ENCODE measurements at regions of chr10 and their contacts with region 1.

Region 1: GRCh38 chr10:45672181-45673073 is at the start of gene ZFAND4:
- DNase-seq: peak; percentile 87 to 98 (median 93)
- ATAC-seq: peak; percentile 98
- H3K4me3 ChIP-seq: peak within 1 kb of the TSS; percentile 86
- H3K4me3 Mint-ChIP-seq: peak within 1 kb of the TSS; percentile 94
- H3K27ac ChIP-seq: peak within 1 kb of the TSS; percentile 64 to 81
- H3K27ac Mint-ChIP-seq: peak within 1 kb of the TSS; percentile 87
- H3K4me1 ChIP-seq: peaks cover 12% of the 10 kb centered on the region
- H3K4me1 Mint-ChIP-seq: peaks cover 42% of the 10 kb centered on the region
- H3K27me3 ChIP-seq: no peaks in the 10 kb centered on the region
- H3K27me3 Mint-ChIP-seq: no peaks in the 10 kb centered on the region
- CTCF ChIP-seq: no peak
- total RNA-seq, gene ZFAND4: 30.4 to 34.5 TPM

Region 2: GRCh38 chr10:45249978-45250693 is 422.3 kb before region 1 on chr10:
- CTCF ChIA-PET with region 1: interaction called, 3 read pairs
- POLR2A ChIA-PET with region 1: no interaction called
- intact Hi-C with region 1: loop called in 1 of 2 experiments (anchors 10 kb)
- DNase-seq: peak in 3 of 14 experiments; percentile 65 to 69 (median 69)
- ATAC-seq: peak; percentile 37
- H3K4me3 ChIP-seq: no peak overlapping the region
- H3K4me3 Mint-ChIP-seq: peak overlapping the region; percentile 21
- H3K27ac ChIP-seq: no peak overlapping the region
- H3K27ac Mint-ChIP-seq: no peak overlapping the region
- H3K4me1 ChIP-seq: peaks cover 3% of the 10 kb centered on the region
- H3K4me1 Mint-ChIP-seq: peaks cover 5% of the 10 kb centered on the region
- H3K27me3 ChIP-seq: no peaks in the 10 kb centered on the region
- H3K27me3 Mint-ChIP-seq: peaks cover 4% of the 10 kb centered on the region
- CTCF ChIP-seq: peak; percentile 72

Region 3: GRCh38 chr10:45464958-45465567 is 207.4 kb before region 1 on chr10:
- CTCF ChIA-PET with region 1: interaction called, 7 read pairs
- POLR2A ChIA-PET with region 1: interaction called, 6 read pairs
- intact Hi-C with region 1: loop called (anchors 2 to 5 kb)
- DNase-seq: peak; percentile 63 to 86 (median 72)
- ATAC-seq: peak; percentile 98
- H3K4me3 ChIP-seq: no peak overlapping the region
- H3K4me3 Mint-ChIP-seq: no peak overlapping the region
- H3K27ac ChIP-seq: no peak overlapping the region
- H3K27ac Mint-ChIP-seq: no peak overlapping the region
- H3K4me1 ChIP-seq: peaks cover 14% of the 10 kb centered on the region
- H3K4me1 Mint-ChIP-seq: peaks cover 25% of the 10 kb centered on the region
- H3K27me3 ChIP-seq: no peaks in the 10 kb centered on the region
- H3K27me3 Mint-ChIP-seq: no peaks in the 10 kb centered on the region
- CTCF ChIP-seq: peak; percentile 90

Region 4: GRCh38 chr10:45580371-45581215 is 91.8 kb before region 1 on chr10:
- CTCF ChIA-PET with region 1: no interaction called
- POLR2A ChIA-PET with region 1: interaction called, 15 read pairs
- intact Hi-C with region 1: no loop called
- DNase-seq: peak in 4 of 14 experiments; percentile 11 to 65 (median 58)
- ATAC-seq: peak; percentile 58
- H3K4me3 ChIP-seq: peak overlapping the region; percentile 56
- H3K4me3 Mint-ChIP-seq: peak overlapping the region; percentile 90
- H3K27ac ChIP-seq: peak overlapping the region; percentile 61 to 86
- H3K27ac Mint-ChIP-seq: peak overlapping the region; percentile 84
- H3K4me1 ChIP-seq: peaks cover 9% of the 10 kb centered on the region
- H3K4me1 Mint-ChIP-seq: peaks cover 43% of the 10 kb centered on the region
- H3K27me3 ChIP-seq: no peaks in the 10 kb centered on the region
- H3K27me3 Mint-ChIP-seq: no peaks in the 10 kb centered on the region
- CTCF ChIP-seq: no peak

Region 5: DNA sequence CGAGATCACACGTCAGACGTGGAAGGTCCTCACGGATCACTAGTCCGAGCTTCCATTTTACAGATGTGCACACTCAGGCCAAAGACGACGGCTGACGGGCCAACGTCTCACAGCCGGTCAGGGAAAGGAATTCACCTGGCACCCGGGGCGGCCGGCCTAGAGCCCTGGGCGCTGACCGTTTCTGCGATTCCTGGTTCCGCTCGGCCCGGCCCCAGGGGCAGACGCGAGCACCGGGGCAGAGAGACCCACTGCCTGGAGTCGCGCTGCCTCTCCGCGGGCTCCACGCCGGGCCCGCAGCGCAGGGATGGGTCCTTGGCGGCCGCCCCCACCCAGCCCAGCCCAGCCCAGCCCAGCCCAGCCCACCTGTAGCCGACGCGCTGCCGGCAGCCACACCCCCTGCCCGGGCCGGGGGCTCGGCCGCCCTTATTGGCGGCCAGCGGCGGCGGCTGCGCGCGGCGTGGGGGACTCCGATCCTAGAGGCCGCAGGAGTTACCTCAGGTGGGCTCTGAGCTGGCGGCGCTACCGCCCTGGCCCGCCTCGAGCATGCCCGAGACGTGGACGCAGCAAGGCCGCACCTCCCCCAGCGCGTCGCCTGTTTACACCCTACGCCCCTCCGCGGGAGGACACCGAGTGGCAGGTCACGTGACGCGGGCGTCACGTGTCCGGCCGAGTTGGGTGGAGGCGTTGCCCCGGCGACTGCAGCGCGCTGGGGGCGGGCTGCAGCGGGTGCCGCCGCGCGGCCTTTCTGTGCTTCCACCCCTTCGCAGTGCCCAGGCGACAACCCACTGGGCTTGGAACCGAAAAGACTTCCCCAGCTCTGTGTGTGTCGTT is 77.9 kb before region 1 on chr10:
- CTCF ChIA-PET with region 1: interaction called, 3 read pairs
- POLR2A ChIA-PET with region 1: interaction called, 10 read pairs
- intact Hi-C with region 1: loop called in 1 of 2 experiments (anchors 2 kb)
- DNase-seq: peak; percentile 75 to 95 (median 87)
- ATAC-seq: peak; percentile 88
- H3K4me3 ChIP-seq: peak overlapping the region; percentile 94
- H3K4me3 Mint-ChIP-seq: peak overlapping the region; percentile 97
- H3K27ac ChIP-seq: peak overlapping the region in 1 of 2 donors; percentile 40
- H3K27ac Mint-ChIP-seq: peak overlapping the region; percentile 87
- H3K4me1 ChIP-seq: peaks cover 12% of the 10 kb centered on the region
- H3K4me1 Mint-ChIP-seq: peaks cover 46% of the 10 kb centered on the region
- H3K27me3 ChIP-seq: no peaks in the 10 kb centered on the region
- H3K27me3 Mint-ChIP-seq: peaks cover 4% of the 10 kb centered on the region
- CTCF ChIP-seq: no peak